Left colon (tissue), 2 donors: ENCODE measurements at regions of chr17 and their contacts with region 1.

Region 1: GRCh38 chr17:35119368-35120165 is at the start of gene RAD51D:
- DNase-seq: peak; percentile 48 to 80
- ATAC-seq: peak; percentile 92
- total RNA-seq, gene RAD51D: 8.8 to 8.9 TPM

Region 2: GRCh38 chr17:34542700-34543336 is 576.7 kb before region 1 on chr17:
- intact Hi-C with region 1: loop called in 1 of 2 experiments (anchors 5 kb)
- DNase-seq: peak in 1 of 2 donors; percentile 32
- ATAC-seq: no peak